ENCODE measurements at regions of chr1 and their contacts with region 1.

Region 1: DNA sequence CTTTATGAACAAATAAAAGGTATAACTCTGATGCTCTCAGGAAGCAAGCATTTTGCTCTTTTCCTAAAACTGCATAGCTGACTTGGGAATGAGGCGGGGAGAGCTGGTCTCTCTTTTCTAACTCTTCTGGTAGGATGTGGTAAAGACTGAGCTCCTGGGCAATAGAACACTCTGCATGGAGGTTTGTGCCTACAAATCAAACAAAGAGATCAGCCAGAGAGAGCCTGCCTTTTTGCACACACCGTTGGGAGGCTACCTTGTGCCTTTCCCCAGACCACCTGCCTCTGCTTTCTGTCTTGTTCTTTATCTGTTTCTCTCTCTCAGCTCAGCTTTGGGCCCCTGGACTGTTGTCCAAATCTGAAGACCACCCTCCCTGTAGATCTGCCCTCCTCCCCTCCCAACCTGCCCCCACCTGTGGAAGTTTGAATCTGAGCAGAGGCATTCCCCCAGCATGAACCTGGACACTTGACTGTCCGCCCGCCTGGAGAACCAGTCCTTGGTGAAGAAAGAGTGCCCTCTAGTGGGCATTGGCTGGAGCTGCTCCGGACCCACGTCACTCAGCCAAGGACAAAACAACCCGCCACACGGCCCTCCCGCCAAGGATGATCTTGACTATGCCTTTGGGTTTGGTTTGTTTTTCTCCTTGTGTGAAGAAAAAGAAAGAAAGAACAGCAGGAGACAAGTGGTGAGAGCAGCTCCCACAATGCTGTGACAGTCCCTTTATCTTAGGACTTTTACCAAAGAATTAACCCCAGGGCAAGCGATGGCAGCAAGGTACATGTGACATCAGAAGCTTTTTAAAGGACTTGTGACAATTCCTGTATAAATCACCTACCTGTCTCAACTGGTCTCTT is 228.2 kb downstream of the PBX1 start:
- DNase-seq: peak; percentile 82 to 86
- H3K4me3 ChIP-seq: no peak overlapping the region
- H3K4me3 Mint-ChIP-seq: peak overlapping the region; percentile 25
- H3K27ac Mint-ChIP-seq: peak overlapping the region; percentile 45
- H3K4me1 ChIP-seq: peaks cover 23% of the 10 kb centered on the region
- H3K4me1 Mint-ChIP-seq: peaks cover 23% of the 10 kb centered on the region
- H3K27me3 ChIP-seq: no peaks in the 10 kb centered on the region
- H3K27me3 Mint-ChIP-seq: no peaks in the 10 kb centered on the region
- CTCF ChIP-seq: peak; percentile 84 to 87

Region 2: DNA sequence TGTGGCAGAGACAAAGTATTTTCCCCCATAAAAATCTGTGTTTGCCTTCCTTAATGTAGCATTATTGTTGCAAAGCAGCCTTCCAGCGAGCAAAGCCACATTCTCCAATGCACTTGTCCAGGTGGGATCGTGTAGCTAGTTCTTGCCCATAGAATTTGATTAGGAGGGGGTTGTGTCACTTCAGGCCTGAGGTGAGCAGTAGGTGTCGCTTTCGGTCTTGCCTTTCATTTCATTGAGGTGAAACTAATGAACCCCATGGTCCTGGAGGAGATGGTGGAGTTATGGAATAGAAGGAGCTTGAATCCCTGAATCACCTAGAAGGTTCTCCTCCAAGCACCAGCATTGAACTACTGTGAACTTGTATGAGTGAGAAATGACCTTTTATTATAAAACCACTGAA is 547.1 kb before region 1 on chr1:
- CTCF ChIA-PET with region 1: interaction called, 6 read pairs
- POLR2A ChIA-PET with region 1: no interaction called
- intact Hi-C with region 1: loop called (anchors 1 kb)
- DNase-seq: peak; percentile 56 to 69
- H3K4me3 ChIP-seq: no peak overlapping the region
- H3K4me3 Mint-ChIP-seq: no peak overlapping the region
- H3K27ac Mint-ChIP-seq: no peak overlapping the region
- H3K4me1 ChIP-seq: no peaks in the 10 kb centered on the region
- H3K4me1 Mint-ChIP-seq: no peaks in the 10 kb centered on the region
- H3K27me3 ChIP-seq: no peaks in the 10 kb centered on the region
- H3K27me3 Mint-ChIP-seq: peaks cover 10% of the 10 kb centered on the region
- CTCF ChIP-seq: peak; percentile 48 to 64

Region 3: DNA sequence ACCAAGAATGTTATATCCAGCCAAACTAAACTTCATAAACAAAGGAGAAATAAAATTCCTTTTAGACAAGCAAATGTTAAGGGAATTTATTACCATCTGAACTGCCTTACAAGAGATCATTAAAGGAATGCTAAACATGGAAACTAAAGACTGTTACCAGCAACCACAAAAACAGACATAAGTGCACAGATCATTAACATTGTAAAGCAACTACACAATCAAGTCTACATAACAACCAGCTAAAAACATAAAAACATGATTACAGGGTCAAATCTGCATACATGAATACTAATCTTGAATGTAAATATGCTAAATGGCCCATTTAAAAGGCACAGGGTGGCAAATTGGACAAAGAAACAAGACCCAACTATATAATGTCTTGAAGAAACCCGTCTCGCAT is 439.2 kb before region 1 on chr1:
- CTCF ChIA-PET with region 1: no interaction called
- POLR2A ChIA-PET with region 1: no interaction called
- intact Hi-C with region 1: no loop called
- DNase-seq: no peak
- H3K4me3 ChIP-seq: no peak overlapping the region
- H3K4me3 Mint-ChIP-seq: no peak overlapping the region
- H3K27ac Mint-ChIP-seq: no peak overlapping the region
- H3K4me1 ChIP-seq: no peaks in the 10 kb centered on the region
- H3K4me1 Mint-ChIP-seq: no peaks in the 10 kb centered on the region
- H3K27me3 ChIP-seq: no peaks in the 10 kb centered on the region
- H3K27me3 Mint-ChIP-seq: peaks cover 3% of the 10 kb centered on the region
- CTCF ChIP-seq: no peak

Region 4: DNA sequence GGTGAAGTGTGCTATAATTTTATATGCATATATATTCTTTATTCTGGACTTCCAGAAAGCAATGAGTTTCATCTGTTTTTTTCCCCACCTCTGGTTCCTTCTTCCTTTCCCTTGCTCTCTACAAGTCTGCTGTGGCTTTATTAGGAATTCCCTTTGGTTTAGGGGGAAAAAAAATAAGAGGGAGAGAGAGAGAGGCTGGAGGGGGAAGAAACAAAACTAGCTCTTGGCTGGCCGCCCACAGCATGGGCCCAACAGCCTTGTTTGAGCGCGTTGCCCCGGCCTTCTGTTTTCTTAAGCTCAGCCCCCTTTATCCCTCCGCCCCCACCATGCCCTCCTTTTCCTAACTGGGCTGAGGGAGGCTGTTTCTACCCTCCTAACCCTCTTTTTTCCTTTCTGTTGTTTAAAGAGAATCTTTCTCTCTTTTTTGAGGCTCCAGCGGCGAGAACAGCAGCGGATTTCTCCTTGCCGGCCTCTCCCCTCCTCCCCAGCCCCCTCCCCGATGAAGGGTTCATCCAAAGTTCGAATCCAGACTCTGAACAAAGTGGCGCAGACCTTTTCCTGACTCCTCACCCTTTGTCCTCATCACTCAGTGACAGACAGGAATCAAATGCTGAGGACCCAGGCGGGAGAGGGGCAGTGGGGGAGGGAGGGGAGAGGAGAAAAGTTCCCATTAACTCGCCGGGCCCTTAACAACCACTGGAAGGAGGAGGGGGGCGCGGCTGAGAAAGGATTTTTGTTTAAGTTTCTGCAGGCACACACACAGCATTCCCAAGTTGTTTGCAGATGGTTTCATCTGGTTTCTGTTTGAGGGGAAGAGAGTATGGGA is 198.5 kb before region 1 on chr1:
- CTCF ChIA-PET with region 1: no interaction called
- POLR2A ChIA-PET with region 1: no interaction called
- intact Hi-C with region 1: loop called (anchors 1 kb)
- DNase-seq: peak; percentile 91 to 95
- H3K4me3 ChIP-seq: peak overlapping the region; percentile 32
- H3K4me3 Mint-ChIP-seq: peak overlapping the region; percentile 73
- H3K27ac Mint-ChIP-seq: peak overlapping the region; percentile 97
- H3K4me1 ChIP-seq: peaks cover 52% of the 10 kb centered on the region
- H3K4me1 Mint-ChIP-seq: peaks cover 71% of the 10 kb centered on the region
- H3K27me3 ChIP-seq: no peaks in the 10 kb centered on the region
- H3K27me3 Mint-ChIP-seq: no peaks in the 10 kb centered on the region
- CTCF ChIP-seq: no peak

Region 5: DNA sequence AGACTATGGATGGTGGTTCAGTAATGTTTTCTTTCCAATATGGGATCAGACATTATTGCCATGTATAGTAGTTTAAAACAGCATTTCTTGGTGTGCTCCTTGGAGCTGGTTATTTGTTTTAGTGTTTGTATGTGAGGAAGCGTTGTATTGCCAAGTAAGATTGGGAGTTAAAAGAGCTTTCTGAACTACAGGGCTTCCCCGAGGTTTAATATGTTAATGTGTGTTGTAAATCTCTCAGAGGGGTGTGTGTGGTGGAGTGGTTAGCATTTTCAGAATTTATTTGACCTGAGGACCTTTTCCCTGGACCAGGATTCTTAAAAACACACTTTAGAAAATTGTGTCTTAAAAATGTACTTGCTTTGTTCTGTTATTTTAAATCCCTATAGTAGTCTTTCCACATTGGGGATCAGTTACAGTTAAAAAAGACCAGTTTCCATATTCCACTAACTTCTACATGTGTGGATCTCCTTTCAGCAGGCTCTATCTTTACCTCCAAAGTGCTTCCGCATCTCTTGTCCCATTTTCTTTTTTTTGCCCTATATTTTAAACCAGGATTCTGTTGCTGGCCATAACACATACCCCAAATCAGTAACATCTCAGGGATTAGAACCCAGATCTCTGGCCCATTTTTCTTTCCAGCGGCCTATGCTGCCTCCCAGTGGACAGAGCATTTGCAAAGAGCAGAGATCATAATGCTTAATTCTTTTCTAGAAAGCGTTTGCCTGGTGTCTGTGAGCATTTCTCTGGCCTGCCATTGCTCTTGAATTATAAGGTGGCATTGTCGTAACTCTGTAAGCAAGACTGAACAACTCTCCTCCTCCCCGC is 169.6 kb before region 1 on chr1:
- CTCF ChIA-PET with region 1: no interaction called
- POLR2A ChIA-PET with region 1: no interaction called
- intact Hi-C with region 1: loop called (anchors 1 kb)
- DNase-seq: peak in 1 of 2 experiments; percentile 47
- H3K4me3 ChIP-seq: no peak overlapping the region
- H3K4me3 Mint-ChIP-seq: no peak overlapping the region
- H3K27ac Mint-ChIP-seq: no peak overlapping the region
- H3K4me1 ChIP-seq: peaks cover 32% of the 10 kb centered on the region
- H3K4me1 Mint-ChIP-seq: peaks cover 30% of the 10 kb centered on the region
- H3K27me3 ChIP-seq: no peaks in the 10 kb centered on the region
- H3K27me3 Mint-ChIP-seq: no peaks in the 10 kb centered on the region
- CTCF ChIP-seq: peak; percentile 44 to 46

Region 6: DNA sequence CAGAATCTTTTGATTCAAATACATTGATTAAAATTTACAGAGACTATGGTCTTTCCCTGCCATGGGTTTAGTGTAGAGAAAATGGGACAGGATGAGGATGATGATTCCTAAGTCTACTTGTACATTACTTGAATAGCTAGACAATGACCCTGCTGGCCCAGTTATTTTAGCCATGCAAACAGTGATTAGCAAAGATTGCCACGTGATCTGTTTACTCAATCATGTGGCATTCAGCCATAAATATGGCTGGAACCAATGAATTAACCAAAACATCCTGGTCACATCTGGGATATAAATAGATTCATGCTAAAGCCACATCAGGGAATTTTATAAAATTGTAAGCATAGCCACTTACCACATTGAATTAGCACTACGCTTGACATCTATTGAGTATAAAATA is 61.0 kb before region 1 on chr1:
- CTCF ChIA-PET with region 1: no interaction called
- POLR2A ChIA-PET with region 1: no interaction called
- intact Hi-C with region 1: no loop called
- DNase-seq: no peak
- H3K4me3 ChIP-seq: no peak overlapping the region
- H3K4me3 Mint-ChIP-seq: no peak overlapping the region
- H3K27ac Mint-ChIP-seq: no peak overlapping the region
- H3K4me1 ChIP-seq: no peaks in the 10 kb centered on the region
- H3K4me1 Mint-ChIP-seq: peaks cover 6% of the 10 kb centered on the region
- H3K27me3 ChIP-seq: no peaks in the 10 kb centered on the region
- H3K27me3 Mint-ChIP-seq: no peaks in the 10 kb centered on the region
- CTCF ChIP-seq: no peak

Region 7: DNA sequence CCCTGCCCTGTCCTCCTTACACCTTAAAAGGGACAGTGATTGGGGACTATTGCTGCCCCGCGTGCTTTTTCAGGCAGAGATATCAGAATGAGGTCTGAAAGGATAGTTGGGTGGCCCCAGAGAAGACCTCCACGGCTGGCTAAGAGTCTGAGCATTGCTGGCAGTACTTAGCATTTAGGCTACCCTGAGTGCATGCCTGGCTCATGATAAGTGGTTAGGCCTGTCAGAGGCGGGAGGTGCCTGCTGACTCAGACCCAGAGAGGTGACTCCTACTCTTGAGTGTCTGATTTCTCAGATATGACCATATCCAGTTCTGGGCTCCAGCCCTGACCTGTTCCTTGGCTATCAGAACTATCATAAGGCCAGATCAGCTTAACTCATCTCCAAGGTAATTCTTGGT is 14.6 kb before region 1 on chr1:
- CTCF ChIA-PET with region 1: no interaction called
- POLR2A ChIA-PET with region 1: no interaction called
- intact Hi-C with region 1: loop called (anchors 2 kb)
- DNase-seq: peak; percentile 53 to 76
- H3K4me3 ChIP-seq: no peak overlapping the region
- H3K4me3 Mint-ChIP-seq: no peak overlapping the region
- H3K27ac Mint-ChIP-seq: peak overlapping the region; percentile 78
- H3K4me1 ChIP-seq: peaks cover 84% of the 10 kb centered on the region
- H3K4me1 Mint-ChIP-seq: peaks cover 78% of the 10 kb centered on the region
- H3K27me3 ChIP-seq: no peaks in the 10 kb centered on the region
- H3K27me3 Mint-ChIP-seq: no peaks in the 10 kb centered on the region
- CTCF ChIP-seq: no peak

Region 8: DNA sequence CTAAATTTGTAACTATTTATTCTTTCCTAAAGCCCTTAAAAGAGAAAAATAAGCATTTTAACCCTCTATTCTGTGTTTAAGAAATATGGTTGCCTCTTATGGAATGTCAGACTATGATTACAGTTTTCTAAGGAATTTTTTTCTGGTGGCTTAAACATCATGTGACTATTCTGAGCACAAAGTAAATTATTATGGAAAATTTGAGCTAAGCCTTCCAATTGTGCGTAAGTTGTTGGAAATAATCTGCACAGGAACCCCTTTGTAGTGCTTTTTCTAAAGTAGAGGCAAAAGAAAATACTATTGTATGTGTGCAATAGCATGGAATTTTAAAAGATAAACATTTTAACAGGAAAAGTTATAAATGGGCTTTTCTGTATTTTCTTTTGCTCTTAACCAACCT is 26.6 kb after region 1 on chr1:
- CTCF ChIA-PET with region 1: no interaction called
- POLR2A ChIA-PET with region 1: no interaction called
- intact Hi-C with region 1: no loop called
- DNase-seq: no peak
- H3K4me3 ChIP-seq: no peak overlapping the region
- H3K4me3 Mint-ChIP-seq: no peak overlapping the region
- H3K27ac Mint-ChIP-seq: no peak overlapping the region
- H3K4me1 ChIP-seq: no peaks in the 10 kb centered on the region
- H3K4me1 Mint-ChIP-seq: no peaks in the 10 kb centered on the region
- H3K27me3 ChIP-seq: no peaks in the 10 kb centered on the region
- H3K27me3 Mint-ChIP-seq: no peaks in the 10 kb centered on the region
- CTCF ChIP-seq: no peak